Activated T-helper 1 cell treated with anti-CD3 and anti-CD28 coated beads, Interleukin-12 subunit alpha, Interleukin-12 subunit beta, Interleukin-2, Interleukin-4 antibody, amounts not matched to agents 30 ng/mL and 10 ng/mL and 1 ng/mL, durations not matched to agents 14 hours and 24 hours and 36 hours (primary cell): ENCODE measurements at regions of chr10 and their contacts with region 1.

Region 1: DNA sequence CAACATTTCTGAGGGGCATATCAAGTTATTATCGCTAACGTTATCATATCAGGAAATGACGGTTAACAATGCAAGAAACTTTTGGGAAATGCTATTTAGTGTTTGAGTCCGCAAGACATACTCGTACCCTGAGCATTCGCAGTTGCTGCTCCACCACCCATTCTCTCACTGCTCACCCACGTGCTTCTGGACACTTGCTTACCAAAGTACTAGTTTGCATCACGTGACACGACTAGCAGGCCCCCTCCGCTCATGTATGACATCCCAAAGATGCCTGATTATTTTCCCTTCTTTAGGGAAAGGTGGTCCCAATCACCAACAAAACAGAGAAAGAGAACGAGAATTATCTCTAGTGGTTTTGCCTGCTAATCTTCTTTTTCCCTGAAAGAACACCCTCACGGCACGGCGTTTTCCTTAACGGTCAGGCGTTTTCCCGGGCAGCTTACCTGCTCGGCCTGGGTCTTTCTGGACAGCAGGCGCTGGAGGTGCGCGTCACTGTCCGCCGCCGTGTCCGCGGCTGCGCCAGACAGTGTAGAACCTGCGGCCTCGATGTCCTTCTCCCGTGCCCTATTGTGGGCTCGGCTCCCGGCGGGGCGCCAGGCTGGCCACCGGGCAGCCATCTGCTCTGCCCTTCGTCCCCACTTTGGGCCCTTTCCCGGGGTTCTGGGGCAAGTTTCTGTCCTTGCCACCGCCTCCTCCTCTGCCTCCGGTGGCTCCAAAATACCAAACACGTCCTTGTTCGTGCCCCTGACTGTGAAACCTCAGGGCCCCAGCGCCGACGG is at the start of gene SUPV3L1:
- DNase-seq: peak; percentile 81
- H3K4me3 Mint-ChIP-seq: peak within 1 kb of the TSS; percentile 95
- H3K27ac Mint-ChIP-seq: peak within 1 kb of the TSS; percentile 99
- H3K4me1 Mint-ChIP-seq: peaks cover 41% of the 10 kb centered on the region
- H3K27me3 Mint-ChIP-seq: no peaks in the 10 kb centered on the region
- total RNA-seq, gene SUPV3L1: 67.5 and 69.1 TPM in 2 replicates

Region 2: GRCh38 chr10:68955832-68956532 is 224.0 kb before region 1 on chr10 and contains the start of gene DDX21:
- intact Hi-C with region 1: loop called (anchors 1 kb)
- DNase-seq: peak; percentile 87
- H3K4me3 Mint-ChIP-seq: peak within 1 kb of the TSS; percentile 99
- H3K27ac Mint-ChIP-seq: peak within 1 kb of the TSS; percentile 99
- H3K4me1 Mint-ChIP-seq: peaks cover 25% of the 10 kb centered on the region
- H3K27me3 Mint-ChIP-seq: no peaks in the 10 kb centered on the region
- total RNA-seq, gene DDX21: 267 and 278 TPM in 2 replicates

Region 3: DNA sequence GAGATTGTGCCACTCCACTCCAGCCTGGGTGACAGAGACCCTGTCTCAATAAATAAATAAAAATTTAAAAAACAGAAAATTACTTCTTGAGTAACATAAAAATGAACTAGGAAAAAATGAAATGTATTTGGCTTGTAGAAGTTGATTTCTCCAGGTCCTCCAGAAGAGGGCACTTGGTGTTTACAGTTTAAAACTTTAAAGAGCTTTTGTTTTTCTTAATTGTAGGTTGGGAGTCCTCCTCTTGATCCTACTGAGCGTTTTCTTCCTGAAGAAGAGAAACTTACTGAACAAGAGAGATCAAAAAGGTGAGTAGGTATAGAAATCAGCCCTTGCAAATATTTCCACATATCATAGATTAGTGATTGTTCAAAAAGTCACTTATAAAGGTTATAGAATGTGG is 175.1 kb before region 1 on chr10:
- intact Hi-C with region 1: loop called (anchors 2 kb)
- DNase-seq: no peak
- H3K4me3 Mint-ChIP-seq: no peak overlapping the region
- H3K27ac Mint-ChIP-seq: no peak overlapping the region
- H3K4me1 Mint-ChIP-seq: peaks cover 18% of the 10 kb centered on the region
- H3K27me3 Mint-ChIP-seq: no peaks in the 10 kb centered on the region

Region 4: DNA sequence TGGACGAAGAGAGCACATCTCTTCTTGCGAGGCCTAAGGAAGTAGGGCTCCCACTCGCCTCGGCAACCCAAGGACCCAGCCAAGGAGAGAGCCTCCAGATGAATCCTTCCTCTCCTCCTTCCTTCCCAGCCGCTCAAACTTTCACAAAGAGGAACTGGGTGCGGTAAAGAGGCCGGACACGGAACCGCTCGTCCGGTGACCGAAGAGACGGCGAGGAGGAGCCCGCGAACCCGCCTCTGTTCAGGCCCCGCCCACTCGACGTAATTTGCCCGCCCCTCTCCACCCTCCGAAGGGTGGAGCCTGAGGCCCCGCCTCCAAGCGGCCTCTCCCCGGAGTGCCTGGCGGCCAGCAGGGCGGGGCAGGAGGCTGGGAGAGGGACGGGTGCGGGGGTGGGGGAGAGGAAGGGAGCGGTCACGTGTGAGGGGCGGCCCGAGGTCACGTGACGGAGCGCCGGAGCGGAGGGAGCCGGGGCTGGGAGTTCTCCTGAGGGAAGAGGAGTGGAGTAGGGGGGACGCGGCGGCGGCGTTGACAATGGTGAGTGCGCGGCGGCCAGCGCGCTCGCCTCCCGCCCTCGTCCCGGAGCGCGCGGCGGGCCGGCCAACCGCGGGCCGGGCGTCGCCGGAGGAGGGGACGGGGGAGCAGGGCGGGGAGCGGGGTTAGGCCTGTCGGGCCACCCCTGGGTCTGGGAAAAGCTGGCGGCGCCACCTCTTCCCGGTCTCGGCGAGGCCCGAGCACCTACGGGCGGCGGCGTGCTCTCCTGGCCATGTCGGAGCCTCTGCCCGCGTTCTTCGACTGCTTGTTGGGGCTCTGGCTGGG is 56.0 kb before region 1 on chr10 and contains the start of gene VPS26A:
- intact Hi-C with region 1: loop called (anchors 1 kb)
- DNase-seq: peak; percentile 99
- H3K4me3 Mint-ChIP-seq: peak within 1 kb of the TSS; percentile 87
- H3K27ac Mint-ChIP-seq: peak within 1 kb of the TSS; percentile 88
- H3K4me1 Mint-ChIP-seq: peaks cover 21% of the 10 kb centered on the region
- H3K27me3 Mint-ChIP-seq: no peaks in the 10 kb centered on the region
- total RNA-seq, gene VPS26A: 24.7 and 24.8 TPM in 2 replicates

Region 5: GRCh38 chr10:69151984-69152383 is 27.9 kb before region 1 on chr10:
- intact Hi-C with region 1: no loop called
- DNase-seq: no peak
- H3K4me3 Mint-ChIP-seq: no peak overlapping the region
- H3K27ac Mint-ChIP-seq: no peak overlapping the region
- H3K4me1 Mint-ChIP-seq: peaks cover 12% of the 10 kb centered on the region
- H3K27me3 Mint-ChIP-seq: no peaks in the 10 kb centered on the region

Region 6: DNA sequence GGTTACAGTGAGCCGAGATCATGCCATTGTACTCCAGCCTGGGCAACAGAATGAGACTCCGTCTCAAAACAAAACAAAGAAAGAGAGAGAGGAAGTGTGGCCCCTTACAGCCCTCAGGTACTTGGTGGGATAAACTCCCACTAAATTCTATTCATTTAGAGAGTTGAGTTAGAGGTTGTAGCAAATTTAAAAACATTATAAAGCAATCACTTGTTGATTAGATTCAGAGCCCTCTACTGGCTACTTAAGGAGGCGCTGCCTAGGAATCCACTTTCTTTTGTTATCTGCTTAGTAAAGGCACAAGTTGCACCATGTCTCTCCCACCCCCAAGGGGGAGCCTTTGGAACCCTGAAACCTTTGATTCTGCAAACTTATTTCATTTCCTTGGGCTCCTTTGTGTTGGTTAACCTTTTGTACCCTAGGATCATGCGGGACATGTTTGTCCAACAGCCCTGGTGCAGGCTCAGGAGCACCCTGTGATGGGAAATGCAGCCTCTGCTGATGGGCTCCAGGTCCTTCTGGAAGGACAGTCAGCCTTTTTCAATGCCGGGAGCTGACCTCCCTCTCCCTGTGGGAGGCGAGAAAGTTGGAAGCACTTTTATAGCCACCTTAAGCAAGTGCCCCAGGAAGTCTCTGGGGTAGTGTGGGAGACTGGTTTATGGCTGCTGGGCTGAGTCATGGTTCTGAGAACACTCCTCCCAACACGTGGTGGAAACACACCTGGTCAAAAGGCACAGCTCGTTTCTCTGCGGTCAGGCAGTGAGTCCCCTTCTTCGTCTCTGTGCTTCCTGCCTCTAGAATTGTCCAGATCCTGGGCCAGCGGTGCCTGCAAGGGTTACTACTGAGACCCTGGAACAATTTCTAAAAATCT is 42.5 kb after region 1 on chr10:
- intact Hi-C with region 1: loop called (anchors 1 kb)
- DNase-seq: peak; percentile 81
- H3K4me3 Mint-ChIP-seq: peak overlapping the region; percentile 71
- H3K27ac Mint-ChIP-seq: peak overlapping the region; percentile 96
- H3K4me1 Mint-ChIP-seq: peaks cover 49% of the 10 kb centered on the region
- H3K27me3 Mint-ChIP-seq: no peaks in the 10 kb centered on the region

Region 7: DNA sequence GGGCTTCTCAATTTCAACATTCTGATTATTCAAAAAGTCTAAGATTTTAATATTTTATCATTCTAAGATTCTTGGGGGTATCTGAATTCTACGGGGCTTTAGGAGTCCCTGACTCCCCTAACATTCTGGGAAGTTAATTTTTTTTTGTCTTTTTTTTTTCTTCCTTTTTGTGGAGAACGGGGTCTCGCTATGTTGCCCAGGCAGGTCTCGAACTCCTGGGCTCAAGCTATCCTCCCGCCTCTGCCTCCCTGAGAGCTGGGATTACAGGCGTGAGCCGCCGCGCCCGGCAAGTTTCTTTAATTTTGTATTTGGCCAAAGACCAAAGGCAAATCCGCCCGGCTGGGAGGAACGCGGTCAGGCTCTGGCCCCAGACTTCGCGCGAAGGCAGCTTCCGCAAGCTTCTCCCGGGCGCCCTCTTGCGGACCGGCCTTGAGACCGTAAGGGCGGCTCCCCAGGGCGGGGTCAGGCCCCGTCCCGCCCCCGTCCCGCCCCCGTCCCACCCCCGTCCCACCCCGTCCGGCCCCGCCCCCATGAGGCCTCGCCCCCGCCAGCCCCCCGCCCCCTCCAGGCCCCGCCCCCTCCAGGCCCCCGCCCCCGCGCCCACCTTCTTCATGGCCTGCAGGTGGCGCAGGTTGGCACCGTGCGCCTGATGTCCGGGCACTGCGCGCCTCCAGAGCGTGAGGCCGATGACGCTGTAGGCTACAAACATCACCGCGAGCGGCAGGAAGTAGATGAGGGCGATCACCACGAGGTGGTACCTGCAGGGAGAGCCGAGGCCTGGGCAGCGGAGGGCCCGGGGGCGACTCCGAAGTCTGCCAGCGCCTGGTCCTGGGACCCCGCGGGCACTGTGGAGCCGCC is 228.6 kb after region 1 on chr10:
- intact Hi-C with region 1: loop called (anchors 2 kb)
- DNase-seq: peak; percentile 81
- H3K4me3 Mint-ChIP-seq: peak overlapping the region; percentile 79
- H3K27ac Mint-ChIP-seq: peak overlapping the region; percentile 82
- H3K4me1 Mint-ChIP-seq: peaks cover 24% of the 10 kb centered on the region
- H3K27me3 Mint-ChIP-seq: no peaks in the 10 kb centered on the region